Left cardiac atrium (tissue), 4 donors: ENCODE measurements at regions of chr2 and their contacts with region 1.

Region 1: DNA sequence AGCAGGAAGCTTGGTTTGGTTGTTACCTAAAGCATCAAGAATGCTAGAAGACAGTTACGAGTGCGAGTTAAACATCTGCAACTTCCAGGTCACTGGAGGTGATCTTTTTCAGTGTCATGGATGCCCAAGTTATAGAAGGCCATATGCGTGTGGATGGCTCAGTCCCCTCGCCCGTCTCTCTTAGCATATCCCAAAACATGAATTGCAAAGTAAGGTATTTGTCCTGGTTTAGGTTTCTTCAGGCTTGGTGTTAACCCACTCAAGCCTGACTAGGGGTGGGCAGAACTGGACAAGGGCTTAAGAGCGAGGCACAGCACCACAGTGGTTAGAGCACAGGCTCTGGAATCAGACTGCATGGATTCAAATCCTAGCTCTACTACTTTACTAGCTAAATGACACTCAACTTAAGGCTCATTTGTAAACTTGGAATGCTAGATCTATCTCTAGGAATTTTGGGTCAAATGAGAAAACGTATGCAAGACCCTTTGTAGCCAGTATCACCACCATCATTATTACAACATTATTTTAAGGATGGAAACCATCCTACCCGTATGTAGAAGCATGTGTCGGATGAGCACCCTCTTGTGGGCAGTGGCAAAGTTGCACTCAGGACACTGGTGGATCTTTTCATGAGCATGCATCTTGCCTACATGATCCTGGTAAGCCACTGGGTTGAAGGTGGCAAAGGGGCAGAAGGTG is 11.2 kb downstream of the ZNF142 start:
- DNase-seq: peak; percentile 51
- ATAC-seq: peak; percentile 70 to 72

Region 2: GRCh38 chr2:218582076-218582475 is 66.2 kb before region 1 on chr2:
- intact Hi-C with region 1: loop called in 1 of 2 experiments (anchors 10 kb)
- DNase-seq: no peak
- ATAC-seq: no peak